Calu3 (cell line): ENCODE measurements at regions of chr6 and their contacts with region 1.

Region 1: DNA sequence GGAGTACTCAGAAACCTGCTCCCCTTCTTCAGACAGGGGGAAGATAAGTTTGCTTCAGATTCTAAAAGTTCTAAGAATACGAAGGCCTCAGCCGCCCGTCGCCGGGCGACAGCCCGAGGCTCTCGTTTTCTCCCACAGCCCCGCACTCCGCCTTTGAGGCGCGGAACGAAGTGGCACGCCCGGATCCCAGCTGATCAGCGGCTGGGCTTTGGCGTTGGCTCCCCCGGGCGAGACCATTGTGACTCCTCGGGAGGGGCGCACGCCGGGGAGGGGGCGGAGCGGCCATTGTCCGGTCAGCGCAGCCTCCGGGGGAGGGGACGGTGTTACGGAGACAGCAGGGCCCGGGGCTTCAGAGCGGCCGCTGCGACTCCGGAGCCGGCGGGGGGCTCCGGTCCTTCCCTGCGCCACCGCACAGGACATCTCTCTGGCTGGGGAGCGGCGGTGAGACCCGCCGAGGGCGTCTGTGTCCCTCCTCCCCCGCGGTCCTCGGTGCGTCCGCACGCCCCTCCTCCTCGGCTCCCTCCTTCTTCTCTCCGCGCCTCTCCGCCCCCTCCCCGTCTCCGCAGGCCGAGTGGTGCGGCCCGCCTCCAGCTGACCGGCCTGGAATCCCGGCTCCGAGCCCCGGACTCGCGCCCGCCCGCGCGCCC is at the start of gene ZFAND3:
- DNase-seq: peak; percentile 99
- H3K4me3 Mint-ChIP-seq: peak within 1 kb of the TSS; percentile 98
- H3K27ac Mint-ChIP-seq: peak within 1 kb of the TSS; percentile 99
- H3K4me1 Mint-ChIP-seq: peaks cover 50% of the 10 kb centered on the region
- H3K27me3 Mint-ChIP-seq: peaks cover 14% of the 10 kb centered on the region
- CTCF ChIP-seq: no peak
- total RNA-seq, gene ZFAND3: 75.0 and 80.5 TPM in 2 replicates

Region 2: GRCh38 chr6:37830225-37830624 is 10.9 kb after region 1 on chr6:
- CTCF ChIA-PET with region 1: no interaction called
- intact Hi-C with region 1: no loop called
- DNase-seq: no peak
- H3K4me3 Mint-ChIP-seq: no peak overlapping the region
- H3K27ac Mint-ChIP-seq: no peak overlapping the region
- H3K4me1 Mint-ChIP-seq: peaks cover 29% of the 10 kb centered on the region
- H3K27me3 Mint-ChIP-seq: no peaks in the 10 kb centered on the region
- CTCF ChIP-seq: no peak

Region 3: GRCh38 chr6:37860226-37860839 is 41.0 kb after region 1 on chr6:
- CTCF ChIA-PET with region 1: interaction called, 8 read pairs
- intact Hi-C with region 1: loop called (anchors 5 kb)
- DNase-seq: peak; percentile 56
- H3K4me3 Mint-ChIP-seq: no peak overlapping the region
- H3K27ac Mint-ChIP-seq: no peak overlapping the region
- H3K4me1 Mint-ChIP-seq: peaks cover 48% of the 10 kb centered on the region
- H3K27me3 Mint-ChIP-seq: no peaks in the 10 kb centered on the region
- CTCF ChIP-seq: peak; percentile 72

Region 4: GRCh38 chr6:38012573-38012972 is 193.3 kb after region 1 on chr6:
- CTCF ChIA-PET with region 1: no interaction called
- intact Hi-C with region 1: loop called (anchors 5 kb)
- DNase-seq: peak; percentile 54
- H3K4me3 Mint-ChIP-seq: no peak overlapping the region
- H3K27ac Mint-ChIP-seq: no peak overlapping the region
- H3K4me1 Mint-ChIP-seq: no peaks in the 10 kb centered on the region
- H3K27me3 Mint-ChIP-seq: no peaks in the 10 kb centered on the region
- CTCF ChIP-seq: peak; percentile 85